ENCODE measurements at regions of chr11 and their contacts with region 1.

Region 1: DNA sequence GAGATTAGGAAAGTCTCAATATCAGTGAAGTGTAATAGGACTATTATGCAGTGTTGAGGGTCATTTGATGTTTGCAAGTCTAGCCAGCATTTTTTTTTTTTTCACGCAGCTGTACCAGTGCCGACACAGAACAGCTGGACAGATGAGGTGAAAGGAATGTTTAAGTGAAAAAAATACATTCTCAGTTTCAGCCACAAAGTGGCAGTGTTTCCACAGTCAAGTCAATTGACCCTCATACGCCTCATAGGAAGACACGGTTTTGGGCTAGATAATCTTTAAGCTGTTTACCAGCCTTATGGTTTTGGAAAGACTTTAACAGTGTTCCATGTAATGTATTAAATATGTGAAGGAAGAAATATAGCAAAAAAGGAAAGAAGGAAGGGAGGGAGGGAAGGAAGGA is 349.9 kb upstream of the ANO3 start:
- DNase-seq: peak; percentile 41
- H3K4me3 ChIP-seq: no peak overlapping the region
- H3K27ac ChIP-seq: no peak overlapping the region
- H3K4me1 ChIP-seq: no peaks in the 10 kb centered on the region
- H3K27me3 ChIP-seq: no peaks in the 10 kb centered on the region
- CTCF ChIP-seq: peak; percentile 59 to 61

Region 2: DNA sequence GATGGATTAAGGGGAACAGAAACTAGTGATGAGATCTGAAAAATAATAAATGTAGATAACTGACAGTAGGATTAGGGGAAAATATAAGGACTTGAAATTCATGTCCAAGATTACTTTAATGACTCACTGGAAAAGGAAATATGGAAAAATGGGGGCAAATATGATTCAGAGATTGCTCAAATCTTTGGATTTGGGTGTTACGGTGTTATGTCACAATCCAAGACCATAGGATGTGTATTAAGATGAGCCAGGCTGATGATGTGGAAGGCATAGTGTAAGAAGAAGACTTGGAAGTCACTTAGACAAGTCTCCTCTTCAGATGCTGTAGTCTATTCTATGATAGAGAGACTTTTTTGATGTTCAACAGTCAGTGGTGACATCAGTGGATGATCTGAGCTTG is 1161.5 kb before region 1 on chr11:
- CTCF ChIA-PET with region 1: no interaction called
- dilution Hi-C with region 1: no loop called
- in situ Hi-C with region 1: no loop called
- intact Hi-C with region 1: loop called (anchors 5 kb)
- DNase-seq: no peak
- H3K4me3 ChIP-seq: no peak overlapping the region
- H3K27ac ChIP-seq: no peak overlapping the region
- H3K4me1 ChIP-seq: no peaks in the 10 kb centered on the region
- H3K27me3 ChIP-seq: no peaks in the 10 kb centered on the region
- CTCF ChIP-seq: no peak

Region 3: DNA sequence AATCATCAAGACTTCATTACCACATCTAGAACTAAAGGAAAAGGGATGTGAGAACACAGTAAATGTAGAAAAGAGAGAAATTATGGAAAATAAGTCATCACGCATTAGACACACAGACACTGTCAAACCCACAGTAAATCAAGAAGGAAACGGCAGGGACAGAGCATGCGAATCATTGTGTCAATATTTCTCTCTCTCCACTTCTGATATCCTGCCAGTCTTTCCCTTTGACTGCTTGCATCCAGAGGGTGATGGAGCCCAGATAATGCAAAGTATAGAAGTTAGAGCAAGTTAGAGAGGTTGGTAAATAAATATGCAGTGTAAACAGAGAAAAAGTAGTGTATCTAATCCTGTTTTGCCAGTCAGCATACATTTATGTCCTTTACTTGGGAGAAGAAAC is 356.9 kb before region 1 on chr11:
- CTCF ChIA-PET with region 1: no interaction called
- dilution Hi-C with region 1: no loop called
- in situ Hi-C with region 1: no loop called
- intact Hi-C with region 1: no loop called
- DNase-seq: no peak
- H3K4me3 ChIP-seq: no peak overlapping the region
- H3K27ac ChIP-seq: no peak overlapping the region
- H3K4me1 ChIP-seq: no peaks in the 10 kb centered on the region
- H3K27me3 ChIP-seq: no peaks in the 10 kb centered on the region
- CTCF ChIP-seq: no peak

Region 4: DNA sequence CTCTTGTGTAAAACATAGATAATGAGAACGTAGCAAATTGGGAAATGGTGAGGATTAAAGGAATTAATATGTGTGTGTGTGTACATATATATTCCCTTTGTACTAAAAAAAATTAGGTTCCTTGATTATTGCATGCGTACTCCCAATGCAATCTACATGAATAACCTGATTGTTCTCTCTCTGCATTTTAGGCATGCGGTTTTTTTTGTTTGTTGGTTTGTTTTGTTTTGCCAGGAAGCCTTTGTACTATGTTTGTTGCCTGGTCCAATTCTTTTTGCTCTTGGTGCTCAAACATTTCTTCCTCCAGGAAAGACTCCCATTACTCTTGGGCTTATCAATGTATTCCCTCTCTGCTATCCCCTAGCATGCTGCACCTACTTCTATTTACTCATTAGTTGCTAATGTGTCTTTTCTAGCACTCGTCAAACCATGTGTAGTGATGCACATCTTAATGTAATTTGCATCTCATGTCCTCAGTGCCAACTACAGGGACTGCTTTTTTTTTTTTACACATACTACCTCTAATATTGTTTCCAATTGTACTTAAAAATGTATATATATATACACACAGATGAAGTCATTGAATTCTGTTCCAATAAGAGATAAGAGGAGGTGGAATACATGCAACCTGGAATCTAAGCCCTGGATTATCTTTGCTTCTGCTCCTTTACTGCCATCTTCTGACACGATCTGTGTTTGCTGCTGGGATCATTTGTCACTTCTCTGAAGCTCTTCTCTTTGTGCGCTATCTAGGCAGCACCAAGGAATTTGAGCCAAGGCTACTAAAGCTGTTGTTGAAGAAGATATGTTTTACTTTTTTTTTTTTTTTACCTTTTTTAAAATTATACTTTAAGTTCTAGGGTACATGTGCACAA is 152.7 kb after region 1 on chr11:
- CTCF ChIA-PET with region 1: interaction called, 7 read pairs
- dilution Hi-C with region 1: no loop called
- in situ Hi-C with region 1: no loop called
- intact Hi-C with region 1: loop called (anchors 1 kb)
- DNase-seq: peak; percentile 32
- H3K4me3 ChIP-seq: no peak overlapping the region
- H3K27ac ChIP-seq: no peak overlapping the region
- H3K4me1 ChIP-seq: no peaks in the 10 kb centered on the region
- H3K27me3 ChIP-seq: no peaks in the 10 kb centered on the region
- CTCF ChIP-seq: peak; percentile 20 to 35

Region 5: GRCh38 chr11:26276798-26277424 is 294.9 kb after region 1 on chr11:
- CTCF ChIA-PET with region 1: interaction called, 18 read pairs
- dilution Hi-C with region 1: no loop called
- in situ Hi-C with region 1: loop called (anchors 10 kb)
- intact Hi-C with region 1: loop called (anchors 1 kb)
- DNase-seq: peak; percentile 35
- H3K4me3 ChIP-seq: no peak overlapping the region
- H3K27ac ChIP-seq: no peak overlapping the region
- H3K4me1 ChIP-seq: no peaks in the 10 kb centered on the region
- H3K27me3 ChIP-seq: no peaks in the 10 kb centered on the region
- CTCF ChIP-seq: peak; percentile 96 to 97

Measured in mammary epithelial cell (primary cell).